ENCODE measurements at regions of chr3 and their contacts with region 1.

Region 1: GRCh38 chr3:152302521-152303021 is 33.8 kb downstream of the MBNL1 start:
- DNase-seq: no peak
- H3K4me3 ChIP-seq: no peak overlapping the region
- H3K4me3 Mint-ChIP-seq: no peak overlapping the region
- H3K27ac Mint-ChIP-seq: no peak overlapping the region
- H3K4me1 ChIP-seq: peaks cover 63% of the 10 kb centered on the region
- H3K4me1 Mint-ChIP-seq: peaks cover 11% of the 10 kb centered on the region
- H3K27me3 ChIP-seq: no peaks in the 10 kb centered on the region
- H3K27me3 Mint-ChIP-seq: no peaks in the 10 kb centered on the region
- CTCF ChIP-seq: no peak

Region 2: DNA sequence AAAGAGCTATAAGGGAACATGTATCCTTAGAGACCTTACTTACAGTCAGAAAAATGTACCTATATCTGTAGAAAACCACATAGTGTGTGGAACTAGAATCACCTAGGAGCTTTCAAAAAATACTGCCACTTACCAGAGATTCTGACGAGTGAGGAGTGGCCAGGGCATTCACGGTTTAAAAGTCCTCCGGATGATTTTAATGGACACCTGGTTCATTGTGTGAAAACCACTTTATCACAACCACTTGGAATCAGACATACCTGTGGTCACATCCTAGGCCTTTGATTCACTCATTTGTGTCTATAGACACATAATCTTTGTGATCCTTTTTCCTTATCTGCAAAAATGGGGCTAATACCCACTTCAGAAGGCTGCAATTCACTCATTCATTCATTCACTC is 126.0 kb after region 1 on chr3:
- CTCF ChIA-PET with region 1: no interaction called
- POLR2A ChIA-PET with region 1: no interaction called
- intact Hi-C with region 1: loop called (anchors 10 kb)
- DNase-seq: no peak
- H3K4me3 ChIP-seq: no peak overlapping the region
- H3K4me3 Mint-ChIP-seq: no peak overlapping the region
- H3K27ac Mint-ChIP-seq: no peak overlapping the region
- H3K4me1 ChIP-seq: peaks cover 7% of the 10 kb centered on the region; the same call in 1 of the 2 replicates
- H3K4me1 Mint-ChIP-seq: no peaks in the 10 kb centered on the region
- H3K27me3 ChIP-seq: no peaks in the 10 kb centered on the region
- H3K27me3 Mint-ChIP-seq: no peaks in the 10 kb centered on the region
- CTCF ChIP-seq: no peak